K562 (cell line): ENCODE measurements at regions of chr7 and their contacts with region 1.

Region 1: DNA sequence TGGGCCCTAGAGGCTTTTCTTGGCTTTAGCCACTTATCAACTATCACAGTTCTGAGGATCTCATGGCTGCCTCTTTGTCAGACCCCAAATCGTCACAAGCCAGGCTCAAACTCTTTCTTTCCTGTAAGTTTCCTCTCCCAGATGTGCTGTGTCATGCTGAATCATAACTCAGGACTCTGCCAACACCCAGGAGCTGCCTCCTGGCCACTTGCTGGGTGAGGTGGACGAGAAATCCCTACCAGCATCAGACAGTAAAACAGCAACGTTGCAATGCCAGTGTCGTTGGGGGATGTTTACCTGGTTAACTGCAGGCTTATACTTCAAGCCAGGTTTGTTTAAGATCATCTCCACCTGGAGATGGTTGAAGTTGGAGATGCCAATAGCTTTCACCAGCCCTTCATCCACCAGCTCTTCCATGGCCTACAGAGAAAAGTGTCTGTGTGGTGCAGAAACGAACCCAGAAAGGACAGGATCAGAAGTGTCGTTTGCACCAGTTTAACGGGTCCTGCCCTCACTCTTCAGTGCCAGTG is 10.1 kb downstream of the AKR1B1 start:
- DNase-seq: peak; percentile 79 to 88 (median 84)
- ATAC-seq: peak; percentile 83
- H3K4me3 ChIP-seq: no peak overlapping the region
- H3K27ac ChIP-seq: peak overlapping the region; percentile 50
- H3K4me1 ChIP-seq: peaks cover 18 to 26% of the 10 kb centered on the region in 2 experiments
- H3K27me3 ChIP-seq: peaks cover 7 to 32% of the 10 kb centered on the region in 2 experiments; a peak in 4 of 5 replicates
- CTCF ChIP-seq: no peak
- EP300 ChIP-seq: peak; percentile 82
- POLR2A ChIP-seq: no peak
- RAD21 ChIP-seq: 0 out of 4 replicates have a peak, but pooled peaks of 1 of the 2 experiments have one; percentile 9

Region 2: DNA sequence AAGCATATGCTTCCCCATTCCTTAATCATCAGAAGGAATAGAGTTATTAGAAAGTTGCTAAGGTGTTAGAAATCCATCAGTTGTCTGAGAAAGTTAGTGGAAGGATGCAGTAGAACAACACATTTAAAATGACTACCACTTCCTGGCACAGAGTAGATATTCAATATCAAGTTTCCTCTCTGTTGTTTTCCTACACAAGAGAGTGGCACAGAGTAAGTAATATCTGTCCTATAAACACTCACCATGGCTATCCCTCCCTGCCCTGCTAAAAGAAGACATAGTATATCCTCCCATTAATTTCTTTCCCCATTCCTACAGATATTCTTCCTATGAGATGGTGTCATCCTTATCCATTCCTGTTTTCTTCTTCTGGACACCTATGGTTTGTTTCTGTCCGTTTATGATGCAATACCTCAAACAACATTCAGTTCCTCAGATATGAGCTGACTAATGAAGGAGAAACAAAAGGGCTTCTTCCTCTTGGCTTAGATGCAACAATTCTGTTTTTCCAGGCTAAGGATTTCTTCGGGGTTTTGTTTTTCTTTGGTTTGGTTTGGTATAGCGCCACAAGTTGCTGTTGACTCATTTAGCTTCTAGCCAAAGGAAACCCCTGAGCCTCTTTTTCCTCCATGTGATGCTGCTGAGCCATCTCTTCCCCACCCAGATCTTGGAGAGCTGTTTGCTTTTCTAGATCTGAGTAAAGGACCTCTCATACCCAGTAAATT is 165.0 kb after region 1 on chr7:
- CTCF ChIA-PET with region 1: no interaction called
- POLR2A ChIA-PET with region 1: interaction called, 3 read pairs
- in situ Hi-C with region 1: loop called (anchors 5 kb)
- intact Hi-C with region 1: no loop called
- DNase-seq: no peak
- ATAC-seq: peak; percentile 64
- H3K4me3 ChIP-seq: no peak overlapping the region
- H3K27ac ChIP-seq: no peak overlapping the region
- H3K4me1 ChIP-seq: no peaks in the 10 kb centered on the region
- H3K27me3 ChIP-seq: peaks cover 3% of the 10 kb centered on the region in 2 experiments; a peak in 1 of 5 replicates
- CTCF ChIP-seq: no peak
- EP300 ChIP-seq: peak; percentile 54; the same call in 1 of the 2 replicates
- POLR2A ChIP-seq: no peak
- RAD21 ChIP-seq: no peak

Region 3: GRCh38 chr7:135023622-135024021 is 574.9 kb after region 1 on chr7:
- CTCF ChIA-PET with region 1: no interaction called
- POLR2A ChIA-PET with region 1: no interaction called
- in situ Hi-C with region 1: no loop called
- intact Hi-C with region 1: no loop called
- DNase-seq: no peak
- ATAC-seq: no peak
- H3K4me3 ChIP-seq: no peak overlapping the region
- H3K27ac ChIP-seq: no peak overlapping the region
- H3K4me1 ChIP-seq: no peaks in the 10 kb centered on the region
- H3K27me3 ChIP-seq: no peaks in the 10 kb centered on the region
- CTCF ChIP-seq: no peak
- EP300 ChIP-seq: no peak
- POLR2A ChIP-seq: no peak
- RAD21 ChIP-seq: no peak